CD8-positive, alpha-beta memory T cell (primary cell): ENCODE measurements at regions of chr15 and their contacts with region 1.

Region 1: DNA sequence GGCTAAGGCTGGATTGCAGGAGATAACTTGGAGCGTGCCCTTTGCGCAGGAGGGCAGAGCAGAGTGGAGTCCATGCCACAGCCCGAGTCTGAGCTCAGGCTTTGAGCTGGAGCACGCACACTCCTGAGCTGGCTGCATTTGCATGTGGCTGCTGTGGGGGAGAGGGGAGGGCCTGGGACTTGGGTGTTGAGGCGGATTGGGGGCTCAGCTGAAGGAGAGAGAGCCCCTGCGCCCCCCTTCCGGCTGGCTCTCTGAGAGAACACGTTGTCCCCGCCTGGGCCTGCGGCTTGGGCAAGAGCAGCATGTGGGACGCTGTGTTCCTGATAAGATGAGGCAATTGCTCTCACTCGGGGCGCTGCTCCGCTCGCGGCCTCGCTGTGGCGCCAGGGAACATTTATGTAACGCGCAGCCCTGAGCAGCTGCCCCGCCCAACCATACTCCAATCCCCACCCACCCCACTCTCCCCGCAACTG is 39.1 kb downstream of the KLF13 start:
- DNase-seq: peak; percentile 67 to 88 (median 82)
- H3K4me3 ChIP-seq: no peak overlapping the region
- H3K4me3 Mint-ChIP-seq: peak overlapping the region; percentile 70 to 95 (median 86)
- H3K27ac ChIP-seq: peak overlapping the region; percentile 33
- H3K27ac Mint-ChIP-seq: peak overlapping the region; percentile 90 to 99 (median 97)
- H3K4me1 ChIP-seq: peaks cover 99% of the 10 kb centered on the region
- H3K4me1 Mint-ChIP-seq: peaks cover 96 to 100% (median 98%) of the 10 kb centered on the region in 3 donors
- H3K27me3 ChIP-seq: no peaks in the 10 kb centered on the region
- H3K27me3 Mint-ChIP-seq: peaks cover 0 to 5% of the 10 kb centered on the region in 2 donors

Region 2: GRCh38 chr15:31215490-31216214 is 150.0 kb before region 1 on chr15:
- CTCF ChIA-PET with region 1: interaction called, 28 read pairs
- POLR2A ChIA-PET with region 1: interaction called, 3 read pairs
- DNase-seq: peak; percentile 69 to 83 (median 73)
- H3K4me3 ChIP-seq: peak overlapping the region; percentile 22
- H3K4me3 Mint-ChIP-seq: peak overlapping the region; percentile 56 to 91 (median 71)
- H3K27ac ChIP-seq: peak overlapping the region; percentile 24
- H3K27ac Mint-ChIP-seq: peak overlapping the region in 7 of 8 donors; percentile 21 to 89 (median 72)
- H3K4me1 ChIP-seq: peaks cover 24% of the 10 kb centered on the region
- H3K4me1 Mint-ChIP-seq: peaks cover 19 to 28% (median 20%) of the 10 kb centered on the region in 3 donors
- H3K27me3 ChIP-seq: no peaks in the 10 kb centered on the region
- H3K27me3 Mint-ChIP-seq: no peaks in the 10 kb centered on the region

Region 3: GRCh38 chr15:31332020-31332680 is 33.5 kb before region 1 on chr15:
- CTCF ChIA-PET with region 1: interaction called, 28 read pairs
- POLR2A ChIA-PET with region 1: interaction called, 62 read pairs
- DNase-seq: no peak
- H3K4me3 ChIP-seq: peak overlapping the region; percentile 44
- H3K4me3 Mint-ChIP-seq: peak overlapping the region; percentile 93 to 99 (median 97)
- H3K27ac ChIP-seq: no peak overlapping the region
- H3K27ac Mint-ChIP-seq: peak overlapping the region; percentile 88 to 99 (median 93)
- H3K4me1 ChIP-seq: peaks cover 81% of the 10 kb centered on the region
- H3K4me1 Mint-ChIP-seq: peaks cover 78 to 87% (median 83%) of the 10 kb centered on the region in 3 donors
- H3K27me3 ChIP-seq: no peaks in the 10 kb centered on the region
- H3K27me3 Mint-ChIP-seq: no peaks in the 10 kb centered on the region

Region 4: DNA sequence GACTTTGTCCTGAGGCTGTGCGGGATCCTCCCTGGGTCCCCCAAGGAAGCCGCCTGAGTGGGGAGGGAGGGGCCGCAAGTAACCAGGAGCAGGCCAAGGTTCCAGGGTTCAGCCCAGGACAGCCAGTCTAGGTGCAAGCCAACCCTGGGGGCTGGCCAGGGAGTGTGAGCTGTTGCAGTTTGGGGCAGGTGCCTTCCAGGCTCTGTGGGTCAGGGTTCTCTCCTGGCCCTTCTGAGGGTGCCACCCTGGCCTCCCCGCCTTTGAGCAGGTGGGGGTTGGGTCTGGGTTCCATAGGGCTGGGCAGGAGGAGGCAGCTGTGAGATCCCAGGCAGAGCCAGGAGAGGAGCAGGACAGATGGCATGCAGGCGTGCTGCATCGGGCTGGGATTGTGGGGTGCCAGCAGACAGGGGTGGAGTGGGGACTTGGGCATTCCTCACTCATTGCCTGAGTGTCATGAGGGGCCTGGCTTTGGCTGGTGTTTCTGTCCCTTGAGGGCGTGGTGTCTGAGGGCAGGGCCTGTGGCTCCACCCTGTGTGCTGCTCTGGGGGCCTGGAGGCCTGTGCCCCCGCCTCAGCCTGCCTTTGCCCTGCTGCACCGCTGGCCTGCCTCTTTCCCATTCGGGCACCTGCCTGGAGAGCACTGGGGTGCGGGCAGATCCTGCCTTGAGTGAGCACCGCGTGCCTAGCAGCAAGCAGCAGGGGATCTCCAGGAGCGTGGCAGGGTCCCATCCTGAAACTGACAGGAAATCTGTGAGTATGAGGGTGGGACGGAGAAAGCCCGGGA is 20.7 kb before region 1 on chr15:
- CTCF ChIA-PET with region 1: interaction called, 224 read pairs
- POLR2A ChIA-PET with region 1: interaction called, 145 read pairs
- DNase-seq: peak in 1 of 5 donors; percentile 60
- H3K4me3 ChIP-seq: peak overlapping the region; percentile 76
- H3K4me3 Mint-ChIP-seq: peak overlapping the region; percentile 81 to 96 (median 92)
- H3K27ac ChIP-seq: peak overlapping the region; percentile 75
- H3K27ac Mint-ChIP-seq: peak overlapping the region; percentile 90 to 99 (median 96)
- H3K4me1 ChIP-seq: peaks cover 100% of the 10 kb centered on the region
- H3K4me1 Mint-ChIP-seq: peaks cover 99 to 100% (median 100%) of the 10 kb centered on the region in 3 donors
- H3K27me3 ChIP-seq: no peaks in the 10 kb centered on the region
- H3K27me3 Mint-ChIP-seq: peaks cover 0 to under 1% of the 10 kb centered on the region in 2 donors

Region 5: DNA sequence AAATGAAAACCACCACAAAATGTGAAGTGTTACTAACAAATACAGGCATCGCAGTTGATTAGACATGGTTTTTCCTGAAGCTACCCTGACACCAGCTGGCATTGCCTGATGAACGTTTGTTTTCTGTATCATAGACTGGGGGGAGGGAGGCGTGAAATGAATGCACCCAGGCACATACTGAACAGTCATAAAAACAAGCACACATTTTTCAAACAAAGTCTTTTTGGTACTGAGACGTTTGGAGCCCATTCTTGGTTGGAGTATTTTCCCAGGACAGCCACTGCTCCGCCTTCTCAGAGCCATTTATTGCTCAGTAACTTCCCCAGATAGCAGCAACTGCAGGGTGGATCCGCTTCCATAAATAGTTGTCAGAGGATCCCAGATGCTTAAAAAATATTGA is 13.4 kb after region 1 on chr15:
- CTCF ChIA-PET with region 1: interaction called, 29 read pairs
- POLR2A ChIA-PET with region 1: interaction called, 6 read pairs
- DNase-seq: no peak
- H3K4me3 ChIP-seq: no peak overlapping the region
- H3K4me3 Mint-ChIP-seq: peak overlapping the region in 3 of 7 donors; percentile 65 to 71 (median 67)
- H3K27ac ChIP-seq: no peak overlapping the region
- H3K27ac Mint-ChIP-seq: peak overlapping the region; percentile 81 to 96 (median 89)
- H3K4me1 ChIP-seq: peaks cover 32% of the 10 kb centered on the region
- H3K4me1 Mint-ChIP-seq: peaks cover 67 to 85% (median 71%) of the 10 kb centered on the region in 3 donors
- H3K27me3 ChIP-seq: no peaks in the 10 kb centered on the region
- H3K27me3 Mint-ChIP-seq: peaks cover 0 to 1% of the 10 kb centered on the region in 2 donors

Region 6: GRCh38 chr15:31391687-31392671 is 26.3 kb after region 1 on chr15:
- CTCF ChIA-PET with region 1: interaction called, 29 read pairs
- POLR2A ChIA-PET with region 1: interaction called, 15 read pairs
- DNase-seq: peak; percentile 78 to 91 (median 82)
- H3K4me3 ChIP-seq: peak overlapping the region; percentile 87
- H3K4me3 Mint-ChIP-seq: peak overlapping the region; percentile 87 to 98 (median 95)
- H3K27ac ChIP-seq: peak overlapping the region; percentile 73
- H3K27ac Mint-ChIP-seq: peak overlapping the region; percentile 82 to 99 (median 98)
- H3K4me1 ChIP-seq: peaks cover 33% of the 10 kb centered on the region
- H3K4me1 Mint-ChIP-seq: peaks cover 49 to 69% (median 57%) of the 10 kb centered on the region in 3 donors
- H3K27me3 ChIP-seq: no peaks in the 10 kb centered on the region
- H3K27me3 Mint-ChIP-seq: peaks cover 0 to 1% of the 10 kb centered on the region in 2 donors

Region 7: DNA sequence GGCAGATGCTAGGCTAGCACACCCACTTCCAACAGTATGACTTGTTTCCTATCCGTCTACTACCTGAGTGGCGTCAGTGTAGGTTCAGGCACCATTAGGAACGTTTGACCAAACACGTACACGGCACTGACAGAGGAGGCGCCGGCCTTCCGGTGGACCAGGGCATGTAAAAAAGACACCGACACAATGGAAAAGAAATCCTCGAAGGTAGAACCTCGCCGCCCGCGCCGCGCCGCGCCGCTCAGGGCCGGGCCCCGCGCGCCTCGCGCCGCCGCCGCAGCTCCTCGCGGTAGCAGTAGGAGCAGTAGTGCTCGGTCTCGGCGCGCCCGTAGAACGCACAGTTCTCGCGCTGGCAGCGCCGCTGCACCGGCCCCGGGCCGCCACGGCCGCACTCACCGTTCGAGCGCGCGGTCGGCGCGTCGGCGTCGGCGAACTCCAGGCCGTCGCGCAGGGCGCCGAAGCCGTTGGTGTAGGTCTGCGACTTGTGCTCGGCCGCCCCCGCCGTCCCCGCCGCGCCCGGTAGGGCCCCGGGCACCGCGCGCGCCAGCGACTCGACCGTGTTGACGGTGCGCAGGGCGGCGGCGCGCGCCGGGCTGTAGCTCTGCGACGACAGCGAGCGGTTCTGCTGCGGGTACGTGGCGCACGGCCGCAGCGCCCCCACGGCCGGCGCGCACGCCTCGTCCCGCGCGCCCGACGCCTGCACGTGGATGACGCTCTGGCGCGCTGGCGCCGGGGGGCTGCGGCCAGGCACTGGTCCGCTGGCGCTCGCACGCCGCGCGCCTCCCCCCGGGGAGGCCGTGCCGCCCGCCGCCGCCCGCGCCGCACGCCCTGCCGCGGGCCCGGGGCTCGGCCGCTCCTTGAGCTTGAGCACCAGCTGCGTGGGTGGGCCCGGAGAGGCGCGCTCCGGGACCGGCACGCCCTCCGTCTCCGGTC is 117.6 kb after region 1 on chr15:
- CTCF ChIA-PET with region 1: interaction called, 63 read pairs
- POLR2A ChIA-PET with region 1: interaction called, 12 read pairs
- DNase-seq: peak; percentile 23 to 70 (median 55)
- H3K4me3 ChIP-seq: peak overlapping the region; percentile 49
- H3K4me3 Mint-ChIP-seq: peak overlapping the region; percentile 91 to 98 (median 97)
- H3K27ac ChIP-seq: peak overlapping the region; percentile 24
- H3K27ac Mint-ChIP-seq: peak overlapping the region; percentile 70 to 96 (median 94)
- H3K4me1 ChIP-seq: peaks cover 36% of the 10 kb centered on the region
- H3K4me1 Mint-ChIP-seq: peaks cover 52 to 87% (median 69%) of the 10 kb centered on the region in 3 donors
- H3K27me3 ChIP-seq: no peaks in the 10 kb centered on the region
- H3K27me3 Mint-ChIP-seq: peaks cover 0 to 2% of the 10 kb centered on the region in 2 donors

Region 8: GRCh38 chr15:31526916-31527690 is 161.4 kb after region 1 on chr15:
- CTCF ChIA-PET with region 1: no interaction called
- POLR2A ChIA-PET with region 1: no interaction called
- DNase-seq: no peak
- H3K4me3 ChIP-seq: no peak overlapping the region
- H3K4me3 Mint-ChIP-seq: no peak overlapping the region
- H3K27ac ChIP-seq: no peak overlapping the region
- H3K27ac Mint-ChIP-seq: peak overlapping the region in 1 of 8 donors; percentile 63
- H3K4me1 ChIP-seq: no peaks in the 10 kb centered on the region
- H3K4me1 Mint-ChIP-seq: no peaks in the 10 kb centered on the region
- H3K27me3 ChIP-seq: no peaks in the 10 kb centered on the region
- H3K27me3 Mint-ChIP-seq: peaks cover 23 to 32% of the 10 kb centered on the region in 2 donors